ENCODE measurements at regions of chr10 and their contacts with region 1.

Region 1: GRCh38 chr10:45373576-45374349 is at the start of gene ALOX5:
- DNase-seq: peak; percentile 27 to 51 (median 50)
- H3K4me3 ChIP-seq: peak within 1 kb of the TSS; percentile 81 to 90 (median 88)
- H3K4me3 Mint-ChIP-seq: peak within 1 kb of the TSS; percentile 91 to 95
- H3K27ac ChIP-seq: peak within 1 kb of the TSS; percentile 79 to 92
- H3K27ac Mint-ChIP-seq: peak within 1 kb of the TSS; percentile 96 to 99 (median 99)
- H3K4me1 ChIP-seq: peaks cover 55 to 63% of the 10 kb centered on the region in 2 donors
- H3K4me1 Mint-ChIP-seq: peaks cover 62% of the 10 kb centered on the region
- H3K27me3 ChIP-seq: peaks cover 15 to 17% of the 10 kb centered on the region in 2 donors
- H3K27me3 Mint-ChIP-seq: peaks cover 18 to 21% (median 21%) of the 10 kb centered on the region in 3 donors
- CTCF ChIP-seq: no peak
- polyA plus RNA-seq, gene ALOX5: 223 to 918 (median 272) TPM

Region 2: GRCh38 chr10:44959247-44960087 is 414.3 kb before region 1 on chr10 and contains the start of gene RASSF4:
- intact Hi-C with region 1: loop called in 1 of 2 experiments (anchors 10 kb)
- DNase-seq: peak; percentile 76 to 85 (median 79)
- H3K4me3 ChIP-seq: peak within 1 kb of the TSS; percentile 83 to 96 (median 91)
- H3K4me3 Mint-ChIP-seq: peak within 1 kb of the TSS; percentile 90 to 99
- H3K27ac ChIP-seq: peak within 1 kb of the TSS; percentile 77 to 81
- H3K27ac Mint-ChIP-seq: peak within 1 kb of the TSS; percentile 83 to 96 (median 95)
- H3K4me1 ChIP-seq: peaks cover 72 to 85% of the 10 kb centered on the region in 2 donors
- H3K4me1 Mint-ChIP-seq: peaks cover 80% of the 10 kb centered on the region
- H3K27me3 ChIP-seq: no peaks in the 10 kb centered on the region
- H3K27me3 Mint-ChIP-seq: peaks cover 0 to 1% (median 0%) of the 10 kb centered on the region in 3 donors
- CTCF ChIP-seq: no peak
- polyA plus RNA-seq, gene RASSF4: 117 to 290 (median 120) TPM

Region 3: DNA sequence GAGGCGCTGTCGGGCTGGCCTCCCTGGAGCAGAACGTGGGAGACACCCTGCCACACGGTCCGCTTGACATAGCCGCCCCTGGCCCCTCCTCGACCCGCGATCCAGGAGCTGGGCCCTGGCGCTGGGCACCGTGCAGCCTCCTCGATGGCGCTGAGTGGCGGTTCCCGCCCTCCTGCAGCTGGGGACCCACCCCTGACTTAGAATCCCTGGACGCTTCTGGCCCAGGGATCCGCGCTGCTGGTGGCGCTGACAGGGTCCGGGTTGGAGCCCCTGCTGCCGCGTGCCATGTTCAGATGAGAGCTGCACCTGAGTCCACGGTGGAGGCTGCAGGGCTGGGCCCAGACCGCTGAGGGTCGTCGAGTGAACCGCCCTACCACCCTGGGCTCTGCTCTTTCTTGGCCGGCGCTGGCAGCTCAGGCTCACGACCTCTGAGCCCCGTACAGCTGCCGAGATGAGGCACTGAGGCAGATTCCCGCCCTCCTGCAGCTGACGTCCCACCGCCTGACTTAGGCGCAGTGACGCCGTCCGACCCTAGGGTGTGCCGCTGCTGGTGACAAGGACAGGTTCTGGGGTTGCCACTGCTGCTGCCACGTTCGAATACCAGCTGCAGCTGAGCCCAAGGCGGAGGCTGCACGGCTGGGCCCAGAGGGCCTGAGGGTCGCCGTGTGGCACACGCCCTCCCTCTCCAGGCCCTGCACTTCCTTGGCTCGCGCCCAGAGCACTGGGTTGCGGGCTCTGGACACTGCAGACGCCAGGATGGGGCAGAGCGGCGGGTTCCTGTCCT is 175.0 kb before region 1 on chr10:
- intact Hi-C with region 1: no loop called
- DNase-seq: no peak
- H3K4me3 ChIP-seq: no peak overlapping the region
- H3K4me3 Mint-ChIP-seq: no peak overlapping the region
- H3K27ac ChIP-seq: no peak overlapping the region
- H3K27ac Mint-ChIP-seq: peak overlapping the region in 1 of 7 donors; percentile 13
- H3K4me1 ChIP-seq: no peaks in the 10 kb centered on the region
- H3K4me1 Mint-ChIP-seq: no peaks in the 10 kb centered on the region
- H3K27me3 ChIP-seq: no peaks in the 10 kb centered on the region
- H3K27me3 Mint-ChIP-seq: peaks cover 0 to 5% (median 4%) of the 10 kb centered on the region in 3 donors
- CTCF ChIP-seq: no peak

Region 4: DNA sequence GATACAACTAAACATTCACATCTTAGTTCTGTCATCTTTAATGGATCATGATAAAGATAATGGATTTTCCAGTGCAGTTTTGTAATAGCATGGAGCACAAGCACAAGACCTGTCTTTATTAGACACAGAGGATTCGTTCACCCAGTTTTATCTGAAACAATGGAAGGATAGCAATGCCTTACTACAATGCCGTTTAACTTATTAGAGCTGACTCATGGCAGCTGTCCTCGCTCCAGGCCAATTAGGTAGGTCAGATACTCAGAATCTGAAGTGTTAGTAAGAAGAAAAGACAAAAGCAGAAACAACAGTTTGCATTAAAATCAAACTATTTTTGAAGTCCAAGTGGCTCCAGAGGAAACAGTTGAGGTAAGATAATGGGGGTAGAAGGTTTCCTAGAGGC is 71.2 kb before region 1 on chr10:
- intact Hi-C with region 1: no loop called
- DNase-seq: no peak
- H3K4me3 ChIP-seq: no peak overlapping the region
- H3K4me3 Mint-ChIP-seq: no peak overlapping the region
- H3K27ac ChIP-seq: no peak overlapping the region
- H3K27ac Mint-ChIP-seq: no peak overlapping the region
- H3K4me1 ChIP-seq: no peaks in the 10 kb centered on the region
- H3K4me1 Mint-ChIP-seq: peaks cover 14% of the 10 kb centered on the region
- H3K27me3 ChIP-seq: no peaks in the 10 kb centered on the region
- H3K27me3 Mint-ChIP-seq: peaks cover 3 to 5% (median 4%) of the 10 kb centered on the region in 3 donors
- CTCF ChIP-seq: no peak

Region 5: GRCh38 chr10:45404087-45404769 is 30.5 kb after region 1 on chr10:
- intact Hi-C with region 1: loop called in 1 of 2 experiments (anchors 5 kb)
- DNase-seq: peak; percentile 84 to 93 (median 90)
- H3K4me3 ChIP-seq: peak overlapping the region in 1 of 3 experiments; percentile 44
- H3K4me3 Mint-ChIP-seq: peak overlapping the region in 1 of 2 donors; percentile 47
- H3K27ac ChIP-seq: peak overlapping the region; percentile 66 to 88
- H3K27ac Mint-ChIP-seq: peak overlapping the region; percentile 63 to 89 (median 87)
- H3K4me1 ChIP-seq: peaks cover 53 to 58% of the 10 kb centered on the region in 2 donors
- H3K4me1 Mint-ChIP-seq: peaks cover 78% of the 10 kb centered on the region
- H3K27me3 ChIP-seq: no peaks in the 10 kb centered on the region
- H3K27me3 Mint-ChIP-seq: peaks cover 0 to 2% (median 0%) of the 10 kb centered on the region in 3 donors
- CTCF ChIP-seq: no peak

Region 6: GRCh38 chr10:45594276-45595106 is 220.7 kb after region 1 on chr10:
- intact Hi-C with region 1: loop called in 1 of 2 experiments (anchors 10 kb)
- DNase-seq: peak; percentile 82 to 90 (median 89)
- H3K4me3 ChIP-seq: peak overlapping the region; percentile 72 to 95 (median 80)
- H3K4me3 Mint-ChIP-seq: peak overlapping the region; percentile 83 to 92
- H3K27ac ChIP-seq: peak overlapping the region in 1 of 2 donors; percentile 43
- H3K27ac Mint-ChIP-seq: peak overlapping the region in 6 of 7 donors; percentile 41 to 80 (median 71)
- H3K4me1 ChIP-seq: peaks cover 21 to 28% of the 10 kb centered on the region in 2 donors
- H3K4me1 Mint-ChIP-seq: peaks cover 30% of the 10 kb centered on the region
- H3K27me3 ChIP-seq: peaks cover 0 to under 1% of the 10 kb centered on the region in 2 donors
- H3K27me3 Mint-ChIP-seq: peaks cover 3 to 15% (median 11%) of the 10 kb centered on the region in 3 donors
- CTCF ChIP-seq: no peak